Naive thymus-derived CD4-positive, alpha-beta T cell (primary cell): ENCODE measurements at regions of chr14 and their contacts with region 1.

Region 1: GRCh38 chr14:49862089-49862673 is 9.6 kb upstream of the NEMF start:
- DNase-seq: peak; percentile 78 to 94 (median 89)
- ATAC-seq: peak; percentile 73
- H3K4me3 ChIP-seq: peak overlapping the region; percentile 94
- H3K4me3 Mint-ChIP-seq: no peak overlapping the region
- H3K27ac ChIP-seq: peak overlapping the region; percentile 95
- H3K27ac Mint-ChIP-seq: no peak overlapping the region
- H3K4me1 ChIP-seq: peaks cover 19 to 25% of the 10 kb centered on the region in 2 donors
- H3K4me1 Mint-ChIP-seq: peaks cover 0 to 33% (median 7%) of the 10 kb centered on the region in 7 donors
- H3K27me3 ChIP-seq: no peaks in the 10 kb centered on the region
- H3K27me3 Mint-ChIP-seq: peaks cover 0 to 9% (median 0%) of the 10 kb centered on the region in 5 donors

Region 2: DNA sequence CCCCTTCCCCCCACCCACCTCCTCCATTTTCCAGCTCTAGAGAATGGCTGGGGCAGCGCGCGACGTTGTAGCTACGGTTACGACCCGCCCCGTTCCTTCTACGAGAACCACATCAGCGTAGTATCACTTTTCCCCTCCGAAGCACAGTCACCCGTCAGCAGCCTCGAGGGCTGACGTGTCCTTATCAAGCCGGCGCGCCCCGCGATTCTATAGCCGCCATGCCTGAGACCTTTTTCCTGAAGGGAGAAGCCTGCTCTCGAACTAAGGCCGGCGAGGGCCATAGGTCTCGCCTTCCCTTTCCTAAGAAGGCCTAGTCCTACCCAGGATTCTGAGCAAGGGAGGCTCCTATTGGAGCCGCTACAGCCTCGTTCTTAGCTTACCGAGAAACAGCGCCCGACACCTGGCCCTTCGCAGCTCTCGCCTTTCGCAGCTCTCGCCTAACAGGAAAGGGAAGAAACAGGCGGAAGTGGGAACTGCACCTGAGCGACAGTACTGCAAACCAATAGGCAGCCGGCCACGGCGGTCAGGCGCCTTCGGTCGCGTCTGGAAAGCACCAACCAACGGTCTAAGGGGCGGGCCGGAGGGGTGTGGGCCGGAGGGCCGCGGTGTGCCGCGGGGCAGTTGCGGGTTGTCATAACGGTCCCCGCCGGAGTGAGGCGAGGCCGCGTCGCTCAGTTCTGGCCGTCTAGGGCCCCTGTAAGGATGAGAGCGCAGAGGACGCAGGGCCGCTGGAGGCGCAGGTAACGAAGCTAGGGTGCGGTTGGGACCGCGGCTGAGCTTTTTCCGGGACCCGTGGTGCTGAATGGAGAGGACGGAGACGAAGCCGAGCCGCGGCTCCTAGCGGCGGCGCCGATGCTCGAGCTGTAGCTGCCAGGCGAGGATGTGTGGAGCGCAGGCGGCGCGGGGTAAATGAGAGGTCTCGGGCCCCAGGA is 241.7 kb before region 1 on chr14 and contains the starts of genes MGAT2 and RPL36AL:
- CTCF ChIA-PET with region 1: interaction called, 9 read pairs
- POLR2A ChIA-PET with region 1: interaction called, 13 read pairs
- intact Hi-C with region 1: no loop called
- DNase-seq: peak; percentile 89 to 95 (median 94)
- ATAC-seq: peak; percentile 92
- H3K4me3 ChIP-seq: peak within 1 kb of the TSS; percentile 98
- H3K4me3 Mint-ChIP-seq: peak within 1 kb of the TSS; percentile 94 to 99 (median 98)
- H3K27ac ChIP-seq: peak within 1 kb of the TSS; percentile 97
- H3K27ac Mint-ChIP-seq: peak within 1 kb of the TSS; percentile 95 to 100 (median 99)
- H3K4me1 ChIP-seq: peaks cover 40 to 42% of the 10 kb centered on the region in 2 donors
- H3K4me1 Mint-ChIP-seq: peaks cover 36 to 75% (median 56%) of the 10 kb centered on the region in 7 donors
- H3K27me3 ChIP-seq: no peaks in the 10 kb centered on the region
- H3K27me3 Mint-ChIP-seq: no peaks in the 10 kb centered on the region
- total RNA-seq, gene MGAT2: 16.8 to 69.3 (median 35.1) TPM
- total RNA-seq, gene RPL36AL: 177 to 429 (median 281) TPM

Region 3: DNA sequence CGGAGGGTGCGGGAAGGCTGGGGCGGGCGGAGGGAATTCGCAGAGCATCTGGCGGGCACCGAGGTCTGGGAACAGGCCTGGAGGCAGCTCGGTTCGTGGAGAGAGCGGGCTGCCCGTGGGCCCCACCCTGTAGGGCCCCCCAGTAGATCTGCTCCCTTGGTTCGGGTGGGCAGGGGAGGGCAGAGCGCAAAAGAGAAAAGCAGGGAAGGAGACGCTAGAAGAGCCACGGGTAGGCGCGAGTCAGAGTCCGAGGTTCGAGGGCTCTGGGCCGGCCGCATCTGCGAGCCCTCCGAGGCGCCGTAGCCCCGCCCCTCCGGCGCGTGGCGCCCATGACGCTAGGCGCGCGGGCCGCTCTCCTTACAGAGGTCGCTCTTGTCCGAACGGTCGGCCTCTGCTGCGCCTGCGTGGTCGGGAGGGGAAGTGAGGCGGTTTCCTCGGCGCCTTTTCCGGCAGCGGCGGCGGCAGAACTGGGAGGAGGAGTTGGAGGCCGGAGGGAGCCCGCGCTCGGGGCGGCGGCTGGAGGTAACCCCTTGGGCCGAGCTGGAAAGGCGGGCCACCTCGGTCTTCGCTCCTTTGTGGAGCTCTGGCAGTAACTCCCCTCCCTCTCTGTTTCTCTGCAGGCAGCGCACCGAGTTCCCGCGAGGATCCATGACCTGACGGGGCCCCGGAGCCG is 30.6 kb after region 1 on chr14 and contains the start of gene ARF6:
- CTCF ChIA-PET with region 1: interaction called, 16 read pairs
- POLR2A ChIA-PET with region 1: interaction called, 61 read pairs
- intact Hi-C with region 1: loop called (anchors 1 kb)
- DNase-seq: peak; percentile 85 to 98 (median 89)
- ATAC-seq: peak; percentile 93
- H3K4me3 ChIP-seq: peak within 1 kb of the TSS; percentile 68
- H3K4me3 Mint-ChIP-seq: peak within 1 kb of the TSS; percentile 95 to 100 (median 98)
- H3K27ac ChIP-seq: peak within 1 kb of the TSS; percentile 97
- H3K27ac Mint-ChIP-seq: peak within 1 kb of the TSS; percentile 98 to 100 (median 99)
- H3K4me1 ChIP-seq: peaks cover 10 to 18% of the 10 kb centered on the region in 2 donors
- H3K4me1 Mint-ChIP-seq: peaks cover 21 to 42% (median 40%) of the 10 kb centered on the region in 7 donors
- H3K27me3 ChIP-seq: no peaks in the 10 kb centered on the region
- H3K27me3 Mint-ChIP-seq: no peaks in the 10 kb centered on the region
- total RNA-seq, gene ARF6: 61.9 to 173 (median 77.6) TPM

Region 4: DNA sequence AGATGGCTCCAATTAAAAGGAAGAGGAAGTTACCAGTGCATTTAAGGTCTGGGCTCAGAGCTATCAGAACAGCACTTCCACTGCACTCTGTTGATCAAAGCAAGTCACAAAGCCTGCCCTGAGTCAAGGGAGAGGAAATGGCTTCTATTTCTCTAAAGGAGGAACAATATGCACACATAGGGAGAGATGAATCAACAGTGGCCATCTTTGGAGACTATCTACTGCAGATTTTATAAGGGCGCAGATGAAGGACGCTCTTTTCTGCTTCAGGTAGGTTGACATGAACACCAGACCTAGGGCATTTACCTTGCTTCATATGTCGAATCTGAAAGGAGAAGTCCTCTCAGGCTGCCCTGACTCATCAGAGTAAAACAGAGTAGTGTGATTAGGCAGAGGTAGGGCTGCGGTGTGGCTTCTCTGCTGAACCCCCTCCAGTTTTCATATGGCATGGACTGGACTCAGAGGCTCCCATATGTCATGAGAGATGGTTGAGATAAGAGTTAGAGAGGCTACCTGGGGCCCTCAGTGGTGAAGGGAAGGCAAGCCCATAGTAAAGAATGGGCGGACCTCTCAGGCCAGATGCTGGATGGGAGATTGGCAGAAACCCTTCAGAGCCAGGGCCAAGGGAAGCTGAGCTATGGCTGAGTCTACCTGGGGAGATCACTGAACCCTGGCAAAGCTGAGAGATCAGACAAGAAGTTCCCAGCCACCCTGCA is 115.1 kb after region 1 on chr14:
- CTCF ChIA-PET with region 1: interaction called, 6 read pairs
- POLR2A ChIA-PET with region 1: interaction called, 87 read pairs
- intact Hi-C with region 1: loop called in 1 of 2 experiments (anchors 1 kb)
- DNase-seq: peak in 8 of 9 donors; percentile 33 to 77 (median 64)
- ATAC-seq: peak; percentile 87
- H3K4me3 ChIP-seq: peak overlapping the region; percentile 58
- H3K4me3 Mint-ChIP-seq: peak overlapping the region; percentile 64 to 85 (median 80)
- H3K27ac ChIP-seq: peak overlapping the region; percentile 71
- H3K27ac Mint-ChIP-seq: peak overlapping the region; percentile 88 to 99 (median 97)
- H3K4me1 ChIP-seq: peaks cover 44 to 76% of the 10 kb centered on the region in 2 donors
- H3K4me1 Mint-ChIP-seq: peaks cover 58 to 99% (median 85%) of the 10 kb centered on the region in 7 donors
- H3K27me3 ChIP-seq: no peaks in the 10 kb centered on the region
- H3K27me3 Mint-ChIP-seq: no peaks in the 10 kb centered on the region

Region 5: DNA sequence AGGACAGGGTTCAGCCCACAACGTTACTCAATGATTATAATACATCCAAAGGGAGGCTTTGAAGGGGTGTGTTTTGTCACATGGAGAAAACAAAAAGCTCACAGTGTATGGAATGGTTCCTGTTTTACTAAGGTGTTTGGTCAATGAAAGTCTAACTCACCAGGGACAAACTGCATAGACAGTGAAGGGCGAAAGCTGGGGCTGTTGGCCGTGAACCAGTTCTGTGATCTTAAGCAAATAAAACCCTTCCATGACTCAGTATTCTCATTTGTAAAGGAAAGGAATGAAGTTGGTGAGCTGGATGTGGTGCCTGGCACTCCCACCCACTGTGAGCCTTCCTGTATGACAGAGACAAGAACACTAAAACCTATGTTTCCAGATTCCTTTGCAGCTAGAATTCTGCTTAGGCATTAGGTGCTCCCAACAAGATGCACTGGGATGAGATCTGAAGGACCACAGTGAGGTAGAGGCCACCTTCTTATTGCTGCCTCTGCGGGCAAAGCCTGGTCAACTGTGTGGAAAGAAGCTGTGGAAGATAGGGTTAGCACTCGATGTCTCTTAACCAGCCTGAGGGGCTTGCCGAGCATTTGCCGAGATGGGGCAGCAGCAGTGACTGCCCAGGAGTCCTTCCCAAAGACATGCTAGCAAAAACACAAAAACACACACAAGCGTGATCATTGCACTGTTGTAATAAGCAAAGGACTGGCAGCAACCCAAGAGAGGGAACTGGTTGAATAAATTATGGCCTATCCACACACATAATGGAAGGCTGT is 205.7 kb after region 1 on chr14:
- CTCF ChIA-PET with region 1: interaction called, 51 read pairs
- POLR2A ChIA-PET with region 1: interaction called, 155 read pairs
- intact Hi-C with region 1: no loop called
- DNase-seq: peak in 1 of 9 donors; percentile 14
- ATAC-seq: no peak
- H3K4me3 ChIP-seq: no peak overlapping the region
- H3K4me3 Mint-ChIP-seq: no peak overlapping the region
- H3K27ac ChIP-seq: no peak overlapping the region
- H3K27ac Mint-ChIP-seq: peak overlapping the region in 4 of 9 donors; percentile 4 to 96 (median 43)
- H3K4me1 ChIP-seq: peaks cover 33% of the 10 kb centered on the region in 2 donors
- H3K4me1 Mint-ChIP-seq: peaks cover 40 to 69% (median 57%) of the 10 kb centered on the region in 7 donors
- H3K27me3 ChIP-seq: no peaks in the 10 kb centered on the region
- H3K27me3 Mint-ChIP-seq: no peaks in the 10 kb centered on the region

Region 6: DNA sequence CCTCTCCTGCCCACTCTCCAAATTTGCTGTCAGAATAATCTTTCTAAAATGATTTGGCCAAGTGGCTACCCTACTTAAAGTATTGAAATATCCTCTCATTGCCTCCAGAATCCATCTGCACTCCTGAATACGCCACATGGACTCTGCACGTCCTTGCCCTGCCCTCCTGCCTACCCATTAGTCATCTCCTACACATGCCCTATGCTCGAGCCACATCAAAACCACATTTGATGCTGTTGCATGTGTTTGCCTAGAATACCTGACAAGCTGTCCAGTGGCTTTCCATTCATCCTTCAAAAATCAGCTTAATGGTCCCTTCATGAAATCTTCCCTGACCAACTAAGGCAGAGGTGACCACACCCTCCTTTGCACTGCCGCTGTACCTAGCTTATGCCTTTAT is 237.2 kb after region 1 on chr14:
- CTCF ChIA-PET with region 1: interaction called, 34 read pairs
- POLR2A ChIA-PET with region 1: interaction called, 328 read pairs
- intact Hi-C with region 1: no loop called
- DNase-seq: no peak
- ATAC-seq: no peak
- H3K4me3 ChIP-seq: no peak overlapping the region
- H3K4me3 Mint-ChIP-seq: peak overlapping the region in 9 of 10 donors; percentile 9 to 61 (median 38)
- H3K27ac ChIP-seq: no peak overlapping the region
- H3K27ac Mint-ChIP-seq: peak overlapping the region; percentile 13 to 87 (median 79)
- H3K4me1 ChIP-seq: peaks cover 23 to 67% of the 10 kb centered on the region in 2 donors
- H3K4me1 Mint-ChIP-seq: peaks cover 39 to 92% (median 76%) of the 10 kb centered on the region in 7 donors
- H3K27me3 ChIP-seq: no peaks in the 10 kb centered on the region
- H3K27me3 Mint-ChIP-seq: peaks cover 0 to 5% (median 0%) of the 10 kb centered on the region in 5 donors

Region 7: DNA sequence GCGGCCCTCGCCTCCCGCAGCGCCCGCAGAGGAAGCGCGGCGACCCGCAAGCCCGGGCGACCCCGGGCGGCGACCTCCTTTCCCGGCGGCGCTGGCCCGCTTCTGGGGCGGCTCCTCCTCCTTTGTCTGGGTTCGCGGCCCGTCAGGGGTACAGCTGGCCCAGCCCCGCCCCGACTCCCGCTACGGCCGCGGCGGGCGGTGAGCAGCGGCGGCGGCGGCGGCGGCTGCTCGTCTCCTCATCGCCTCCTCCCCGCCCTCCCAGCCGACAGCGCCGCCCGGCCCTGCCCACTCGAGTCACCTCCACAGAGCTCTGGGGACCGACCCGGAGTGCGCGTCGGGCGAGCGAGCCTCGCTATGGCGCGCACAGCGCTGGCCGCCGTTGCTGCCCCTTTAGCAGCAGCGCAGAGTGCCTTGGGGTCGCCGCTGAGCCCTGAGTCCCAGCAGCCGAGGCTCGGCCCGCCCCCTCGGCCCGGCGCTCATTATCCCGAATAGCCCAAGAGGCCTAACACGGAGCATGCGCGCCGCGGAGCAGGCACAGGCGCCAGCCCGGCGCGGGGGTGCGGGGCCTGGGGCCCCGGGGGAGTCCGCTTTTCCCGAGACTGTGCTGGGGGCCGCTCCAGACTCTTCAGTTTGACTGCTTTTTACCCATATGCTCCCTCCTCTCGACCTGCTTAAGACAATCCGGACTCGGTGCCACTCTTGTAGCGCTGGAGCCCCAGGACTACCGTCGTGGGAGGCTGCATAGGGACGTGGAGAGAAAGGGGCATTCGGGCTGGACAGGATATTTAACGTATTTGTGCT is 369.5 kb after region 1 on chr14 and contains the start of gene SOS2:
- CTCF ChIA-PET with region 1: interaction called, 3 read pairs
- POLR2A ChIA-PET with region 1: interaction called, 4 read pairs
- intact Hi-C with region 1: loop called (anchors 1 to 2 kb)
- DNase-seq: peak; percentile 71 to 84 (median 80)
- ATAC-seq: peak; percentile 92
- H3K4me3 ChIP-seq: peak within 1 kb of the TSS; percentile 89
- H3K4me3 Mint-ChIP-seq: peak within 1 kb of the TSS; percentile 80 to 97 (median 91)
- H3K27ac ChIP-seq: peak within 1 kb of the TSS; percentile 81
- H3K27ac Mint-ChIP-seq: peak within 1 kb of the TSS; percentile 90 to 96 (median 95)
- H3K4me1 ChIP-seq: peaks cover 6 to 17% of the 10 kb centered on the region in 2 donors
- H3K4me1 Mint-ChIP-seq: peaks cover 19 to 47% (median 42%) of the 10 kb centered on the region in 7 donors
- H3K27me3 ChIP-seq: no peaks in the 10 kb centered on the region
- H3K27me3 Mint-ChIP-seq: no peaks in the 10 kb centered on the region
- total RNA-seq, gene SOS2: 19.7 to 49.6 (median 38.7) TPM